Natural killer cell (primary cell): ENCODE measurements at regions of chr9 and their contacts with region 1.

Region 1: DNA sequence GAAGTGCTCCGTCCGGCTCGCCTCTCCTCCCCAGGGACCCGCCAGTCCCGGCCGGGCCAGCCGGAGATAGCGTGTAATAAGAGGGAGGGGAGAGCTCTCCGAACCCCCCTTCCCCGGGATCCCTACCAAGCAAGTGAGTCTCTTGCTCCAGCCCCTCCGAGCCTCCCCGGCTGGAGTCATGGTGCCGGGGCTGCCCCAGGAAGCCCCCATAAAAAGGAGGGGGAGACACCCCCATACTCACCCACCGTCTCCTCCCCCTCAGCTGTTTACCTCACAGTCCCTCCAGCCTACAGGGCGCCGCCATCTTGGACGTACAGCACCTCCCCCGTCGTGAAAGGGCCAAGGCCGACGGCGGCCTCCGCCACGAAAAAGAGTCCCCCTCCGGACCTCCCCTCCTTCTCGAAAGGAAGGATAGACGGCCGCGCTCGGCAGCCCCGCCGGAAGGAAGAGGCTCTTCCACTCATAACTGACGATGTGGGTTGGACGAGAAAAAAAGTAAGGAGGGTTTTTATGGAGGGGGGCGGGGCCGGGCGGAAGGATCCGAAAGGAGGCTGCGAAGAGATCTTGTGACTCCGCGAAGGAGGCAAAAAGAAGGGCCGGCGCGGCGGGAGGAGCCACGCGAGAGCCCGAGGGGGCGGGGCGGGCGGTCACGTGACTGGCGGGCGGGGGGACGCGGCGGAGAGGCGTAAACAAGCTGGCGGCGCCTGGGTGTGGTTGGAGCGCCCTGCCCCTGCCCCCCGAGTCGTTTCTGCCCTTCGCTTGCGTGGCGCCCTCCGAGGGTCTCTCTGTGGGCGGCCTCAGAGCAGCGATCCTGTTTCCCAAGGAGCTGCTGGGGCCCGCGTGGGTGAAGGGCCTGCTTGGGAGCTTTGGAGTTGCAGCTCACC is at the start of gene TSC1:
- DNase-seq: peak; percentile 95 to 96
- ATAC-seq: peak; percentile 88 to 96 (median 90)
- H3K4me3 ChIP-seq: peak within 1 kb of the TSS; percentile 97
- H3K4me3 Mint-ChIP-seq: peak within 1 kb of the TSS; percentile 97
- H3K27ac ChIP-seq: peak within 1 kb of the TSS; percentile 97
- H3K27ac Mint-ChIP-seq: peak within 1 kb of the TSS; percentile 98 to 99
- H3K4me1 ChIP-seq: peaks cover 16% of the 10 kb centered on the region
- H3K4me1 Mint-ChIP-seq: peaks cover 22 to 27% of the 10 kb centered on the region in 2 donors
- H3K27me3 ChIP-seq: no peaks in the 10 kb centered on the region
- H3K27me3 Mint-ChIP-seq: no peaks in the 10 kb centered on the region
- CTCF ChIP-seq: no peak
- total RNA-seq, gene TSC1: 58.0 to 73.5 (median 63.3) TPM

Region 2: DNA sequence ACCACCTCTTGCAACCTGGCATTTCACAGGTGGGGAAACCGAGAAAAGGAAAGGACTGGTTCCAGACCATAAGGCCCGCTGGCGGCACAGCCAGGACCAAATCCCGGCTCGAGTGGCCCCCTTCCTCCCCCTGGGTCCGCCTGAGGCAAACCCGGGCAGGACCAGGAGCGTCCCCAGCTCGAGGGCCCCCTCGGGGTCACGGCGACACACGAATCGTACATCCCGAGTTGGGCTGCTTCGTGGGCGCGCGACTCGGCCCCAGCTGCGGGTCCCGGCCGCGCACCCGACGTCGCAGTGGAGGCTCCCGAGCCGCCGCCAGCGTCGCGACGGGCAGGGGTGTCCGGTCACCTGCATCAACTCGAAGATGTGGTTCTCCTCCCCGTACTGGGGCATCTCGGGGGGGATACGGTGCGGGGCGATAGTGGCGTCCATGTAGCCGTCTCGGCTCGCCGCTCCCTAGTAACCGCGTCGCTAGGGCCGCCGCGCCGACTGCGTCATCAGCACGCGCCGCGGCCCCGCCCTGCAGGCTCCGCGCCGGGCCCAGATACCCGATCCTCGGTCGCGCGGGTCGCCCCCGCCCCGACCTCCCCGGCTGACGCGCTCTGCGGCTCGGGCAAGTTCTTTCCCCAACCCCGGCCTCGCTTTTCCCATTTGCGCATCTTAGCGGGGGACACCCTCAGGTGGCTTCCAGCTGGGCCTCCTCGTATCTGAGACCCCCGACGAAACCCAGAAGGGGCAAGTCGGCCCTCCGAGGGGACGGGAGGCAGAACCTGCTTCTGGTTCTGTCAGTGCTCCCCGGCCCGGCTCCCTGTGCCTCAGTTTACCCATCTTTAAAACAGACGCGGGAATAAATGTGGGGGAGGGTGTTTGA is 66.5 kb before region 1 on chr9 and contains the start of gene AK8:
- intact Hi-C with region 1: loop called (anchors 1 kb)
- DNase-seq: peak; percentile 82 to 89
- ATAC-seq: peak; percentile 81 to 90 (median 89)
- H3K4me3 ChIP-seq: peak within 1 kb of the TSS; percentile 78
- H3K4me3 Mint-ChIP-seq: peak within 1 kb of the TSS; percentile 86
- H3K27ac ChIP-seq: peak within 1 kb of the TSS; percentile 56
- H3K27ac Mint-ChIP-seq: peak within 1 kb of the TSS; percentile 74 to 84
- H3K4me1 ChIP-seq: peaks cover 45% of the 10 kb centered on the region
- H3K4me1 Mint-ChIP-seq: peaks cover 21 to 29% of the 10 kb centered on the region in 2 donors
- H3K27me3 ChIP-seq: no peaks in the 10 kb centered on the region
- H3K27me3 Mint-ChIP-seq: peaks cover 0 to 6% of the 10 kb centered on the region in 2 donors
- CTCF ChIP-seq: no peak
- total RNA-seq, gene AK8: 0.14 to 0.21 (median 0.18) TPM

Region 3: GRCh38 chr9:132908635-132909034 is 35.9 kb before region 1 on chr9:
- intact Hi-C with region 1: no loop called
- DNase-seq: peak in 1 of 2 donors; percentile 72
- ATAC-seq: peak; percentile 67 to 93 (median 84)
- H3K4me3 ChIP-seq: no peak overlapping the region
- H3K4me3 Mint-ChIP-seq: peak overlapping the region; percentile 67
- H3K27ac ChIP-seq: no peak overlapping the region
- H3K27ac Mint-ChIP-seq: peak overlapping the region; percentile 73 to 75
- H3K4me1 ChIP-seq: peaks cover 14% of the 10 kb centered on the region
- H3K4me1 Mint-ChIP-seq: peaks cover 7 to 10% of the 10 kb centered on the region in 2 donors
- H3K27me3 ChIP-seq: no peaks in the 10 kb centered on the region
- H3K27me3 Mint-ChIP-seq: no peaks in the 10 kb centered on the region
- CTCF ChIP-seq: no peak

Region 4: DNA sequence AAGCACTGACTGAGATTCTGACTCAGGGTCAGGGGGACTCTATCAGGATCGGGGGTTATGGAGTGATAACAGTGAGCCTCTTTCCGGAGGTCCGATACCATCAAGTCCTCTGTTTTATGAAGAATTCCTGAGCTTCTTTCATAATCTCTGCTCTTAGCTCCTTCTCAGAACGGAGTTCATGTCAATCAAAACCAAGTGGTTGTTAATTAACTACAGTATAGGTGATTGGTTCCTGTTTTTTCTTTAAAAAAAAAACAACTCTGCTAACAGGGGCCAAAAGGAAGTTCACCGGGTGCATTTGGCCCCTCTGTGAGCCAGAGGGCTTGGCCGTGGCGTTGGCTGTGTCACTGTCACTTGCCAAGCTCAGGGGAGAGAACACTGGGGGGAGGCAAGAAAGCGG is 37.9 kb after region 1 on chr9:
- intact Hi-C with region 1: no loop called
- DNase-seq: no peak
- ATAC-seq: no peak
- H3K4me3 ChIP-seq: no peak overlapping the region
- H3K4me3 Mint-ChIP-seq: no peak overlapping the region
- H3K27ac ChIP-seq: no peak overlapping the region
- H3K27ac Mint-ChIP-seq: no peak overlapping the region
- H3K4me1 ChIP-seq: peaks cover 37% of the 10 kb centered on the region
- H3K4me1 Mint-ChIP-seq: peaks cover 19 to 29% of the 10 kb centered on the region in 2 donors
- H3K27me3 ChIP-seq: peaks cover 8% of the 10 kb centered on the region
- H3K27me3 Mint-ChIP-seq: peaks cover 15 to 17% of the 10 kb centered on the region in 2 donors
- CTCF ChIP-seq: no peak

Region 5: GRCh38 chr9:132994410-132995120 is 50.0 kb after region 1 on chr9:
- intact Hi-C with region 1: no loop called
- DNase-seq: peak in 1 of 2 donors; percentile 39
- ATAC-seq: peak; percentile 25 to 57 (median 53)
- H3K4me3 ChIP-seq: peak overlapping the region; percentile 17
- H3K4me3 Mint-ChIP-seq: peak overlapping the region; percentile 84
- H3K27ac ChIP-seq: peak overlapping the region; percentile 52
- H3K27ac Mint-ChIP-seq: peak overlapping the region; percentile 78 to 87
- H3K4me1 ChIP-seq: peaks cover 56% of the 10 kb centered on the region
- H3K4me1 Mint-ChIP-seq: peaks cover 50 to 57% of the 10 kb centered on the region in 2 donors
- H3K27me3 ChIP-seq: no peaks in the 10 kb centered on the region
- H3K27me3 Mint-ChIP-seq: no peaks in the 10 kb centered on the region
- CTCF ChIP-seq: no peak